ENCODE measurements at regions of chr10 and their contacts with region 1.

Region 1: GRCh38 chr10:104308439-104308903 is 29.8 kb downstream of the ITPRIP start:
- DNase-seq: peak; percentile 61
- H3K4me3 Mint-ChIP-seq: peak overlapping the region; percentile 22
- H3K27ac Mint-ChIP-seq: peak overlapping the region; percentile 92
- H3K4me1 Mint-ChIP-seq: peaks cover 80% of the 10 kb centered on the region
- H3K27me3 Mint-ChIP-seq: peaks cover 5% of the 10 kb centered on the region

Region 2: GRCh38 chr10:104291439-104291951 is 17.0 kb before region 1 on chr10:
- CTCF ChIA-PET with region 1: interaction called, 65 read pairs
- DNase-seq: peak; percentile 91
- H3K4me3 Mint-ChIP-seq: no peak overlapping the region
- H3K27ac Mint-ChIP-seq: no peak overlapping the region
- H3K4me1 Mint-ChIP-seq: peaks cover 14% of the 10 kb centered on the region
- H3K27me3 Mint-ChIP-seq: peaks cover 35% of the 10 kb centered on the region

Region 3: DNA sequence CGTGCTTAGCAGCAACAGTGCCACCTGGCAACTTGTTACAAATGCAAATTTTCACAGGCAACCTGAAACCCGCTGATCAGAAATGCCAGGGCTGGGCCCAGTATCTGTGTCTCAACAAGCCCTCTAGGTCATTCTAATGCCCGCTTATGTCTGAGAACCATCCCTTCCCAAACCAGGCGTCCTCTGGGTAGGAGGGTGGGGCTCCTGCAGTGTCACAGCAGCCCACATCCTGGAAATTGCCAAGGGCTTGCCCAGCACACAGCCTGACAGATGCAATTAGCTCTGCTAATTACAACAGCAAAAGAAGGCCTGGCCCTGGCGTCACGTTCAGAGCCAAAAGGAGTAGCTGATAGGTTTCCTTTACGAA is 13.9 kb after region 1 on chr10:
- CTCF ChIA-PET with region 1: interaction called, 40 read pairs
- DNase-seq: peak; percentile 62
- H3K4me3 Mint-ChIP-seq: peak overlapping the region; percentile 65
- H3K27ac Mint-ChIP-seq: peak overlapping the region; percentile 90
- H3K4me1 Mint-ChIP-seq: peaks cover 93% of the 10 kb centered on the region
- H3K27me3 Mint-ChIP-seq: no peaks in the 10 kb centered on the region

Region 4: GRCh38 chr10:104328896-104329710 is 20.6 kb after region 1 on chr10:
- CTCF ChIA-PET with region 1: interaction called, 52 read pairs
- DNase-seq: peak; percentile 85
- H3K4me3 Mint-ChIP-seq: peak overlapping the region; percentile 74
- H3K27ac Mint-ChIP-seq: peak overlapping the region; percentile 95
- H3K4me1 Mint-ChIP-seq: peaks cover 99% of the 10 kb centered on the region
- H3K27me3 Mint-ChIP-seq: no peaks in the 10 kb centered on the region

Region 5: GRCh38 chr10:104337974-104338735 is 29.7 kb after region 1 on chr10 and contains the start of gene ITPRIP:
- CTCF ChIA-PET with region 1: interaction called, 52 read pairs
- DNase-seq: peak; percentile 80
- H3K4me3 Mint-ChIP-seq: peak within 1 kb of the TSS; percentile 82
- H3K27ac Mint-ChIP-seq: peak within 1 kb of the TSS; percentile 99
- H3K4me1 Mint-ChIP-seq: peaks cover 50% of the 10 kb centered on the region
- H3K27me3 Mint-ChIP-seq: peaks cover 15% of the 10 kb centered on the region